Activated T-helper 2 cell treated with anti-CD3 and anti-CD28 coated beads, Interferon-gamma antibody, Interleukin-2, Interleukin-4, amounts not matched to agents 10 μg/mL and 5 μg/mL and 100 μg/mL, durations not matched to agents 14 hours and 24 hours and 36 hours (primary cell): ENCODE measurements at regions of chr4 and their contacts with region 1.

Region 1: DNA sequence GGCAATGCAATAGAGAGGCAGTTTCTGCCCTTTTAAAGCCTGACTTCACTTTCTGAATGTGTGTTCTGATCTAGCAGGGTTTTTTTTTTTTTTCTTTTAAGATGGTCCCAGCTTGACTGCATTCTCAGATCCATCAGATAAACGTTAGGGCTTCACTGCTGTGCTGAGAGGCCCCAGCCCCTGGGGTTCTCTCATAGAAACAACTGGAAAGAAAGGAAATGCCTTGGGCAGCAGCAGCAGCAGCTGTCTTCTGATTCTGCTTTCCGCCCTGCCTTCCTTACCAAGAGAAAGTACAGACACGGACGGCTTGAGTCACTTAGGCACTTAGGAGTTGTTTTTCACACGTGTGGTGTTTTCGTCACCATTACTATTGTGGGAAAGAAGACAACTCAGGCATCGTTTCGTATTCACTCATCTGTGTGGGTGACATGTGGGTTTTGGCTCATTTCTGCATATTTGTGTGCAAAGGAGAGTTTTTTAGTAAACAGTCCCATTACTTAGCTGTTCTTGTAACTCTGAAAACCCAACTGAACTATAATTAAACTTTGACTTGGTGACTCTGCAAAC is 172.0 kb downstream of the PTTG2 start:
- DNase-seq: peak; percentile 74
- H3K4me3 Mint-ChIP-seq: peak overlapping the region; percentile 2
- H3K27ac Mint-ChIP-seq: peak overlapping the region; percentile 93
- H3K4me1 Mint-ChIP-seq: peaks cover 63% of the 10 kb centered on the region
- H3K27me3 Mint-ChIP-seq: no peaks in the 10 kb centered on the region

Region 2: DNA sequence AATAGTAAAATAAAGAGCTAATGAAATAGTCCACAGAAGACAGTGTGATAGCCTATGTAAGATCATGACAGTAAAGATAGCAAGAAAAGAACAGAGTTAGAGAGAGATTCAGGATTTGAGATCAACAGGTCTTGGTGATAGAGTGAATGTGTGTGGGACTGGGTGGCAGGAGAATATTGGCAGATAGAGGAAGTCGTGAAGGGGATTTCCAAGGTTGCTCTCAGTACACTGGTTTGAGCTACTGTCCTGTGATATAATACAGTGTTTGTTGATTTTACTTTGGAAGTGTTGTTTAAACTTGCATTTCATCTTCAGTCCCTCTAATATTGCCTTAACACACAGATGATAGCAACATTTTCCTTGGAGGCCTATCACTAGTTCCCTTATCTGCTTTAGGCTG is 1806.7 kb before region 1 on chr4:
- intact Hi-C with region 1: loop called (anchors 10 kb)
- DNase-seq: no peak
- H3K4me3 Mint-ChIP-seq: no peak overlapping the region
- H3K27ac Mint-ChIP-seq: peak overlapping the region; percentile 63
- H3K4me1 Mint-ChIP-seq: peaks cover 62% of the 10 kb centered on the region
- H3K27me3 Mint-ChIP-seq: no peaks in the 10 kb centered on the region

Region 3: DNA sequence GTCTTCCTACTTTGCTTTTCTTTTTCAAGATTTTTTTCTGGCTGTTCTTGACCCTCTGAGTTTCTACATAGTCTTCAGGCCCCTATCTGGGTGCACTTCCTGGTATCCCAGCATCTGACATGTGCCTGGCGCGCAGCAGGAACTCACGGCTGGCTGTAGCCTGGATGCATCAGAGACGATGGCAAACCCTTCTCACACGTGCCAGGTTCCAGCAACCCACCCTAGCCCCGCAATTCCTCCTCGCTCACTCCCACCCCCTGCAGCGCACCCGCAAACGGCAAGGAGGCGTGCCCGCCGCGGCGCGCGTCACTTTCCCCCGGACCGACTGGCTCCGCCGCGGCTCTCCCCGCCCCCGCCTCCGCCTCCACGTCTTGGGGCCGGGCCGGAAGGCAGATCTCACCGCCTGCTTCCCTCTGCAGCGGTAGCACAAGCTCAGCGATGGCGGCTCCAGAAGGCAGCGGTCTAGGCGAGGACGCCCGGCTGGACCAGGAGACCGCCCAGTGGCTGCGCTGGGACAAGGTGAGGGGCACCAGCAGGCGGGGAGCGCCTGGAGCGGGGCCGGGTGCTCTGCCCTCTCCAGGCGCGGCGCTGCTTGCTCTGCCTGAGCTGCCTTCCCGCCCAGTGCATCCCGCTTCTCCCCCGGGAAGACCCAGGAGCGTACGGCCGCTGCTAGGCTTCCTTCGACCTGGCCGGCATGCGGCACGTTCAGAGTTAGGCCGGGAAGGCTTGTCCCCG is 305.7 kb before region 1 on chr4 and contains the start of gene PGM2:
- intact Hi-C with region 1: loop called (anchors 5 kb)
- DNase-seq: peak; percentile 88
- H3K4me3 Mint-ChIP-seq: peak within 1 kb of the TSS; percentile 91
- H3K27ac Mint-ChIP-seq: peak within 1 kb of the TSS; percentile 87
- H3K4me1 Mint-ChIP-seq: peaks cover 43% of the 10 kb centered on the region
- H3K27me3 Mint-ChIP-seq: peaks cover 5% of the 10 kb centered on the region
- total RNA-seq, gene PGM2: 49.3 and 52.5 TPM in 2 replicates

Region 4: GRCh38 chr4:38090455-38091246 is 41.5 kb before region 1 on chr4:
- intact Hi-C with region 1: loop called (anchors 1 kb)
- DNase-seq: no peak
- H3K4me3 Mint-ChIP-seq: no peak overlapping the region
- H3K27ac Mint-ChIP-seq: peak overlapping the region; percentile 73
- H3K4me1 Mint-ChIP-seq: peaks cover 20% of the 10 kb centered on the region
- H3K27me3 Mint-ChIP-seq: no peaks in the 10 kb centered on the region

Region 5: GRCh38 chr4:38100474-38101255 is 31.5 kb before region 1 on chr4:
- intact Hi-C with region 1: no loop called
- DNase-seq: no peak
- H3K4me3 Mint-ChIP-seq: no peak overlapping the region
- H3K27ac Mint-ChIP-seq: no peak overlapping the region
- H3K4me1 Mint-ChIP-seq: peaks cover 9% of the 10 kb centered on the region
- H3K27me3 Mint-ChIP-seq: no peaks in the 10 kb centered on the region

Region 6: DNA sequence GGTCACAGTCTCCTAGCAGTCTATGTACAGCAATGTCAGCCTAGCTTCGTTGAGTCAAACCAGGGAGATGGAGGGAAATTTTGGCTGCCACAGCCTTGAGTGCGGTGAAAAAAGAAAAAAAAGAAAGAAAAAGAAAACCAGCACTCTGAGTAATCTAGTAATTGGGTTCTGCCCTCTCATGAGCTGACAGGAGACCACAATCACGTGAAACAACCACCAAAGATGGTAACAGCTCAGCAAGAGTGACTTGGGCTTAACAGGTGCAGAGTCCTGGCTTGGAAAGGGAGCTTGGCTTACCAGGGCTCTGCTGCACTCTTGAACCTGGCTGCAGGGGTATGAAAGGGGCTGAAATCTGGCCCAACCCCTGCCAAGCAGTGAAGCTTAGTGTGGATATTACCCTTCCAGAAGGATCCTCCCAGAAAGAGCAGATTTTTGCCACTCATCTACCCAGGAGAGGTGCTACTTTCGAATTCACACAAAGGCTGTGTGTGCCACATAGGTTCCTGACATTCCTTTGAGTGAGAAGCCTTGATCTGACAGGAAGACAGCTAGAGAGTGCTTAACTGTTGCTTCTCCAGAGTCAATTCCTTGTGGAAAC is 178.4 kb after region 1 on chr4:
- intact Hi-C with region 1: loop called (anchors 1 kb)
- DNase-seq: peak; percentile 77
- H3K4me3 Mint-ChIP-seq: no peak overlapping the region
- H3K27ac Mint-ChIP-seq: peak overlapping the region; percentile 38
- H3K4me1 Mint-ChIP-seq: peaks cover 58% of the 10 kb centered on the region
- H3K27me3 Mint-ChIP-seq: peaks cover 36% of the 10 kb centered on the region

Region 7: GRCh38 chr4:38663801-38664705 is 531.9 kb after region 1 on chr4 and contains the start of gene KLF3:
- intact Hi-C with region 1: loop called (anchors 5 kb)
- DNase-seq: peak; percentile 78
- H3K4me3 Mint-ChIP-seq: peak within 1 kb of the TSS; percentile 75
- H3K27ac Mint-ChIP-seq: no peak within 1 kb of the TSS
- H3K4me1 Mint-ChIP-seq: peaks cover 23% of the 10 kb centered on the region
- H3K27me3 Mint-ChIP-seq: peaks cover 65% of the 10 kb centered on the region
- total RNA-seq, gene KLF3: 0.62 and 0.71 TPM in 2 replicates